IMR-90 (cell line): ENCODE measurements at regions of chr16 and their contacts with region 1.

Region 1: DNA sequence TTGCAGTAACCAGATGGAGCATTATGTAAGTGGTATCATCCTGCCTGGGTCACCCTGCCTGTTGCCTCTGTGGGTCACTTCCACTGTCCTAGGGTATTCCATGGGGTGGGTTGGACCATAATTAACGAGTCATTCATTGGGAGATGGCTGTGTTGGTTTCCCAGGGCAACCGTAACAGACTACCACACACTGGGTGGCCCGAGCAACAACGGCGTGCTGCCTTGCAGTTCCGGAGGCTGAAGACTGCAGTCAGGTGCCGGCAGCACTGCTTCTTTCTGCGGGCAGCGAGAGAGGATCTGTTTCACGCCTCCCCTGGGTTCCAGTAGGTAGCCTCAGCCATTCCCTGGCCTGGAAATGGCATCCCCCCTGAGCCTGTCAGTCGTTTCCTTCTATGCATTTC is 28.9 kb upstream of the CMIP start:
- DNase-seq: no peak
- ATAC-seq: no peak
- H3K4me3 ChIP-seq: no peak overlapping the region
- H3K27ac ChIP-seq: no peak overlapping the region
- H3K4me1 ChIP-seq: peaks cover 2% of the 10 kb centered on the region; the same call in 1 of the 2 replicates
- H3K27me3 ChIP-seq: peaks cover 4% of the 10 kb centered on the region
- CTCF ChIP-seq: no peak
- POLR2A ChIP-seq: no peak
- RAD21 ChIP-seq: no peak

Region 2: DNA sequence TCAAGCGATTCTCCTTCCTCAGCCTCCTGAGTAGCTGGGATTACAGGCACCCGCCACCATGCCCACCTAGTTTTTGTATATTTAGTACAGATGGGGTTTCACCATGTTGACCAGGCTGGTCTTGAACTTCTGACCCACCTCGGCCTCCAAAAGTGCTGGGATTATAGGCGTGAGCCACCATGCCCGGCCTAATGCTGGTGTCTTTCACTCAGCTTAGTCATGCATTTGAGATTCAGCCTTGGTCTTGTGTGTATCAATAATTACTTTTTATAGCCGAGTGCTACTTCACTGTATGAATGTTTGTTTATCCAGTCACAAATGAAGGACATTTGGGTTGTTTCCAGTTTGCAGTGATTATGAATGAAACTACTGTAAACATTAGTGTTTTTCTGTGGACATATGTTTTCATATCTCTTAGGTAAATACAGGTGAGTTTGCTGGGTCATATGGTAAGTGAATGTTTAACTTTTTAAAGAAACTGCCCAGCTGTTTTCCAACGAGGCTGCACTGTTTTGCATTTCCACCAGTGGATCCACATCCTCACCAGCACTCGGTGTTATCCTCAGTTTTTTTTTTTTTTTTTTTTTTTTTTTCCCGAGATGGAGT is 352.3 kb after region 1 on chr16:
- CTCF ChIA-PET with region 1: no interaction called
- POLR2A ChIA-PET with region 1: interaction called, 10 read pairs
- dilution Hi-C with region 1: no loop called
- in situ Hi-C with region 1: no loop called
- intact Hi-C with region 1: no loop called
- DNase-seq: no peak
- ATAC-seq: no peak
- H3K4me3 ChIP-seq: no peak overlapping the region
- H3K27ac ChIP-seq: no peak overlapping the region
- H3K4me1 ChIP-seq: no peaks in the 10 kb centered on the region
- H3K27me3 ChIP-seq: peaks cover 10% of the 10 kb centered on the region
- CTCF ChIP-seq: no peak
- POLR2A ChIP-seq: no peak
- RAD21 ChIP-seq: no peak

Region 3: GRCh38 chr16:82024316-82024715 is 608.6 kb after region 1 on chr16:
- CTCF ChIA-PET with region 1: no interaction called
- POLR2A ChIA-PET with region 1: no interaction called
- dilution Hi-C with region 1: no loop called
- in situ Hi-C with region 1: no loop called
- intact Hi-C with region 1: no loop called
- DNase-seq: no peak
- ATAC-seq: no peak
- H3K4me3 ChIP-seq: no peak overlapping the region
- H3K27ac ChIP-seq: no peak overlapping the region
- H3K4me1 ChIP-seq: no peaks in the 10 kb centered on the region
- H3K27me3 ChIP-seq: peaks cover 16% of the 10 kb centered on the region
- CTCF ChIP-seq: no peak
- POLR2A ChIP-seq: no peak
- RAD21 ChIP-seq: no peak